Activated CD8-positive, alpha-beta memory T cell treated with anti-CD3 and anti-CD28 coated beads, Interleukin-2, amount 10 ng/mL, durations not matched to agents 7 days and 5 days (primary cell): ENCODE measurements at regions of chr10 and their contacts with region 1.

Region 1: DNA sequence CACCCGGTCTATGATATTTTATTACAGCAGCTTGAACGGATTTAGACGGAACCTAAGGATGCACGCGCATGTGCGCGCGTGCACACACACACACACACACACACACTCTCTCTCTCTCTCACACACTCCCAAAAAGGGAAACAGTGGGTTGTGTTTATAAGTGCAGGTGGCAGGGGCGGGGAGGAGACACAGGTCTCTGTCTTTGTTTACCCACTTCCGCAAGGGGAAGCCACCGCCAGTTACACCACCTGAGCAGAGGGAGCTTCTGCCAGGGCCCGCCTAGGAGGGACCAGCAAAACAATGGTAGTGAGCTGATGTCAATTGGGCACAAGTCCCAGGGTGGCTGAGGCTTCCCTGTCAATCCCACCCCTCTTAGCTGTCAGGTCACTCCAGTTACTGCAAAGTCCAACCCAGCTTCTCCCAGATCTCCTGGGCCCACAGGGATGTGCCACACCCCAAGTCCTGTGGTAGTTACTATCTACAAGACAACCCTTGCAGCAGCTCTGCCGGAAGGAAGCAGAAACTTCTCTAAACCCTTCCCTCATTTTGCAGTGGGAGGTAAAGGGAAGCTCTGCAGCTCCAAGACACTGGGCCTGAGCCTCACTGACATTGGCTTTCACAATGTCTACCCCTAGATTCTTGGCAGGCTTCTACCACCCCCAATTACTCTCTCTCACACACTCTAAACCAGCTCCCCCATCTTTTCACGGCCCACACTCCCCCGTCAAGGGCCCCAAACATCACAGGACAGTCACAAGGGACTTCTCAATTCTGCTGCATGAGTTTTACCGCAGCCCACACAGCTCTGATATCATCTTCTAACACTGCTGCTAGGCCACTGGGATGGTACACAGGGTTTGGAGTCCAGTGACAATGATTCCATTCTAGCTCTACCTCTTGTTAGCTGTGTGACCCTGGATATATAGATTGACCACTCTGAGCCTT is 17.6 kb downstream of the ANXA11 start:
- DNase-seq: peak; percentile 94
- ATAC-seq: peak; percentile 90
- H3K4me3 Mint-ChIP-seq: peak overlapping the region; percentile 63
- H3K27ac Mint-ChIP-seq: peak overlapping the region; percentile 94
- H3K4me1 Mint-ChIP-seq: peaks cover 67% of the 10 kb centered on the region
- H3K27me3 Mint-ChIP-seq: no peaks in the 10 kb centered on the region

Region 2: DNA sequence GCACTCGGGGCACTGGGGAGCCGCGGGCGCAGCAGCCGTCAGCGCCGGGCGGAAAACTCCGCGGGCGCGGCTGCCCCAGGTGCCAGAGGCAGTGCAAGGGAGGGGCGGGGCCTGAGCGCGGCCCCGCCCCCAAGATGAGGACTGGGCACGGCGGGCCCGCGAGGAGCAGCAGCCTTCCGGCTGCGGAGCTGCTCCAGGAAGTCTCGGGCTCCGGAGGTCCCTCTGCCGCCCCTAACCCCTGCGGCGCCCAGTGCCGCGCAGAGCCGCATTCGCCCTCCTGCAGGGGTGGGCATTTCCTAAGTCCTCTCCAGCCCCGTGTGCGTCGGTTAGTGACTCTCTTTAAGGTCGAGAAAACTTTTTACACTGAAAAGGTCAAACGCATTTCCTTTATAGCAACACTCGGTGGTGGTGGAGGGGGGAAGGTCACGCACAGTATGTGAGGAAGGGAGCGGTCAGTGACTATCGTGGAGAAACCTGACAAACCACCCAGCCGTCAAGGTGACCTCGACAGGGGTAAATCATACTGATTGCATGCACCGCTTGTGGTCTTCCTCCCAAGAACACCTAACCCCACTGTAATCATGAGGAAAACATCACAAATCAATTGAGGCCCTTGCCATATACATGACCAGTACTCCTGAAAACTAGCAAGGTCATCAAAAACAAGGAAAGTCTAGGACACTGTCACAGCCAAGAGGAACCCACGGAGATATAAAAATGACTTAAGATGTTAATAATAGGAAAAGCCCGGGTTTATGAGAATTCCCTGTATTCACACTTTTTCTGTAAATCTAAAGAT is 17.9 kb after region 1 on chr10 and contains the start of gene ANXA11:
- CTCF ChIA-PET with region 1: interaction called, 17 read pairs
- DNase-seq: peak; percentile 89
- ATAC-seq: peak; percentile 85
- H3K4me3 Mint-ChIP-seq: peak within 1 kb of the TSS; percentile 97
- H3K27ac Mint-ChIP-seq: peak within 1 kb of the TSS; percentile 93
- H3K4me1 Mint-ChIP-seq: peaks cover 40% of the 10 kb centered on the region
- H3K27me3 Mint-ChIP-seq: no peaks in the 10 kb centered on the region
- total RNA-seq, gene ANXA11: 251 to 288 TPM